Dorsolateral prefrontal cortex (tissue), 120 donors: ENCODE measurements at regions of chr18 and their contacts with region 1.

Region 1: DNA sequence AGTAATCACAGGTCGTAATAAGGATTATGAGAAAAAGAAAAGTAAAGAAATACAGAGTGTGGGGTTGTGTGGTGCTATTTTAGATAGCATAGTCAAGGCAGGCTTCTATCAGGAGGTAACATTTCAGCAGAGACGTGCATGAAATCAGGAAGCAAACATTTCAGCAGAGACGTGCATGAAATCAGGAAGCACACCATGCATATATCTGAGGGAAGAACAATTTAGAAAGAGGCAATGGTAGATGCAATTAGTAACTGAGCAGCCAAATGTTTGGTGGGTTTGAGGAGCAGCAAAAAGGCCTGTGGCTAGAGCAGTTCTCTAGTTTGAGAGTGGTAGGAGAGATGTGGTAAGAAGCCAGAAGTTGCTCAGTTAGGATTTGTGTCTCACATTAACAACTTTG is 713.7 kb downstream of the ADCYAP1 start:
- DNase-seq: no peak
- H3K4me3 ChIP-seq: no peak overlapping the region
- H3K27ac ChIP-seq: no peak overlapping the region
- H3K27me3 ChIP-seq: peaks cover 0 to 6% (median 0%) of the 10 kb centered on the region in 45 donors
- CTCF ChIP-seq: no peak

Region 2: GRCh38 chr18:1846640-1847039 is 228.3 kb after region 1 on chr18:
- intact Hi-C with region 1: loop called in 1 of 2 experiments (anchors 10 kb)
- DNase-seq: no peak
- H3K4me3 ChIP-seq: no peak overlapping the region
- H3K27ac ChIP-seq: no peak overlapping the region
- H3K27me3 ChIP-seq: peaks cover 0 to 6% (median 0%) of the 10 kb centered on the region in 45 donors
- CTCF ChIP-seq: no peak